ENCODE measurements at regions of chr13 and their contacts with region 1.

Region 1: DNA sequence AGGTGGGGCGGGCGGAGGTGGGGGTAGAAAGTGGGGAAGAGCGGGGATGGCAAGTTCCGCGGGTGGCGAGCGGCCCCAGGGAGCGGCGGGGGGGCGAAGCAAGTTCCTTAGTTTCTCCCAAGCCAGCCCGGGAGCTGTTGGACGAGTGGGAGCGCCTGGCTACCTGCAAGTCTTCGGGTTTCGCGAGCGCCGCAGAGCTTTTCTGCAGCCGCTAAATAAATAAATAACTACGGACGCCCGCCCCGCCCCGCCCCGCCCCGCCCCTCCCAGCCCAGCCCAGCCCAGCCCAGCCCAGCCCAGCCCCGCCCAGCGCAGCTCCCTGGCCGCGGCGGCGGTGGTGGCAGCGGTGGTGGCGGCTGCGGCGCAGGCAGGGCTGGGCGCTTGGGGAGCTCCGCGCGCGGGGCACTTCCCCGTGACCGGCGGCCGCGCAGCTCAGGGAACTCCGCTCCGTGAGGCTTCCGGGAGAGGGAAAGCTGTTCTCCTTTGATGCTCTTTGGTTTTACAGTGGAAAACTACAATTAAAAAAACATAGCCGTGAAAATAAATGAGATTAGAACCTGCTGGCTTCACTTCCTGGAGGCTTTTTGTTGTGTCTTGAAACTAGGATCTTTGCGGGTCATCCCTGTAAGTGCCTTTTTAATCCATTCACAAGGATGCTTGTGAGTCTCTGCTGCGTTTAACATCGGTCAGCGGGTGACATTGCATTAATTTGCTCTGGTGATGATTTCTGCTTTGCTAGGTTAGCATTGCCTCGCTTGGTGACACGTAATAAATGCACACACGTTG is at the start of gene UBE2L5:
- DNase-seq: peak; percentile 85 to 92
- ATAC-seq: peak; percentile 92
- H3K4me3 ChIP-seq: peak within 1 kb of the TSS; percentile 73 to 92
- H3K27ac ChIP-seq: peak within 1 kb of the TSS; percentile 94 to 95
- H3K4me1 ChIP-seq: no peaks in the 10 kb centered on the region
- H3K27me3 ChIP-seq: no peaks in the 10 kb centered on the region
- total RNA-seq, gene UBE2L5: 1.7 TPM in 1 of 2 donors, not detected in the other

Region 2: DNA sequence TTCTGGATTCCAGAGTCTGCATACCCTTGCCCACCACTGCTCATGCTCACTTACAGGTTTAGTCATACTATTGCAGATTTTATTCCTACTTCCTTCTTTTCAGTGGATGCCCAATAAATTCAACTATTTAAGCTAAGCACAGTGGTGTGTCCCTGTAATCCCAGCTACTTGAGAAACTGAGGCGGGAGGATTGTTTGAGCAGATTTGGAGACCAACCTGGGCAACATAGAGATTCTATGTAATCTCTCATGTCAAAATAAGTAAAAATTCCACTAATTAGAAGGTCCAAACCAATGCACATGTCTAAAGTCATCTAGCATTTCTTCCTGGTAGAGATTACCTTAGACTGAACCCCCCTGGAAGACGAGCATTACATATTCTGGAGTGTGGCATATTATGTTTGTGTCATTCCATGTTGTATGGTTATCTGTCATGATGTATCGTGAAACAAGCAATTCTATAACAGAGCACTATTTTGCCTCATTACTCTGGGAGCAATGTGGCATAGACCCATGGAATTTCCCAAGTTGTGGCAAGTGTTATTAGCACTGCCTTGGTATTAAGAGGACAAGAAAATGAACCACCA is 35.2 kb after region 1 on chr13:
- intact Hi-C with region 1: loop called (anchors 5 kb)
- DNase-seq: no peak
- ATAC-seq: no peak
- H3K4me3 ChIP-seq: no peak overlapping the region
- H3K27ac ChIP-seq: no peak overlapping the region
- H3K4me1 ChIP-seq: peaks cover 0 to 4% of the 10 kb centered on the region in 2 donors
- H3K27me3 ChIP-seq: no peaks in the 10 kb centered on the region

Measured in aorta (tissue), 5 donors.